ENCODE measurements at regions of chr15 and their contacts with region 1.

Region 1: GRCh38 chr15:66472176-66472999 is 25.2 kb downstream of the SNAPC5 start:
- DNase-seq: peak; percentile 43 to 81
- ATAC-seq: peak; percentile 91 to 96 (median 94)
- H3K4me3 ChIP-seq: no peak overlapping the region
- H3K4me3 Mint-ChIP-seq: peak overlapping the region; percentile 62
- H3K27ac ChIP-seq: peak overlapping the region; percentile 66
- H3K27ac Mint-ChIP-seq: peak overlapping the region; percentile 87 to 88
- H3K4me1 ChIP-seq: peaks cover 15% of the 10 kb centered on the region
- H3K4me1 Mint-ChIP-seq: peaks cover 31 to 33% of the 10 kb centered on the region in 2 donors
- H3K27me3 ChIP-seq: no peaks in the 10 kb centered on the region
- H3K27me3 Mint-ChIP-seq: no peaks in the 10 kb centered on the region
- CTCF ChIP-seq: no peak

Region 2: GRCh38 chr15:66401130-66402021 is 71.0 kb before region 1 on chr15:
- intact Hi-C with region 1: loop called (anchors 5 kb)
- DNase-seq: peak in 1 of 2 donors; percentile 42
- ATAC-seq: no peak
- H3K4me3 ChIP-seq: no peak overlapping the region
- H3K4me3 Mint-ChIP-seq: peak overlapping the region; percentile 62
- H3K27ac ChIP-seq: no peak overlapping the region
- H3K27ac Mint-ChIP-seq: peak overlapping the region; percentile 66 to 70
- H3K4me1 ChIP-seq: peaks cover 18% of the 10 kb centered on the region
- H3K4me1 Mint-ChIP-seq: peaks cover 56% of the 10 kb centered on the region in 2 donors
- H3K27me3 ChIP-seq: no peaks in the 10 kb centered on the region
- H3K27me3 Mint-ChIP-seq: no peaks in the 10 kb centered on the region
- CTCF ChIP-seq: no peak

Region 3: DNA sequence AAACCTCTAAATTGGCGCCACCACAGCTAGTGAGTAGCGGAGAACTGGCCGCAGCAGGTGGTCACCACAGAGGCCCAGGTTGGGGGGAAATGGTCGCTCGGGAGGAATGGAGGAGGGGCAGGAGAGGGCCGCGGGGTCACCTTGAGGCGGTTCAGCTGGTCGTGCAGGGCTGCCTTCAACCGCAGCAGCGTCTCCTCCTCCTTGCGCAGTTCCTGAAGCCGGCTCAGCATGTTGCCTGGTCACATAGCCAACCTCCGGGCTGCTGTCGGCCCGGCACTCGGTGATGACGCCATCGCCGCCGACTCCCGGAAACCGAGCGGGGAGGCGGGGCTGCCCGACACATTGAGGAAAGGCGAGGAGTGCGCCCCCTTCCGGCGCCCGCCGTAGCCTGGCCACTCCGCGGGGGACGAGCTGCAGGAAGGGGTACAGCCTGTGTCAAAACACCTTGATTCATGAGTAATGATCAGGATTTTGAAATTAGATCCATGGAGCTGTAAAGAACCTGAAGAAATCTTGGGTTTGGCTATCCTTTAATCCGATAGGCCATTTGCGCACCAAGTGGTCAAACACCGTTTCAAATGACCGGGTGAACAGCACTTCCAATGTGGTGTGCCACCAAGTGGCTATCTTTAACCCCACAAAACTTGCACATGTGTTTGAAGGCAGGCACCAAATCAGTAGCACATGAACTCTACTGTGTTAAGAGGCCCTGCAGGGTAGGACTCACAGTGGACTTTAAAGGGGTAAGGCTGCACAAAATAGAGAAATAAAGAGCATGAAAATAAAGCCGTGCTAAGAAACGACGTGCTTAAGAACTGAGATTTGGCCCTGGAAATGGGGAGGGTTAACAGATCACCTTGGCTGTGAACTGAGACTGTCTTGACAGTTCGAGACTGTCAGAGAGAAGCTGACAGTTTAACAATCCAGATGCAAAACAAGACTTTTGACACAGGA is 25.4 kb after region 1 on chr15 and contains the start of gene SNAPC5:
- intact Hi-C with region 1: loop called (anchors 1 kb)
- DNase-seq: peak; percentile 98
- ATAC-seq: peak; percentile 95 to 98 (median 96)
- H3K4me3 ChIP-seq: peak within 1 kb of the TSS; percentile 79
- H3K4me3 Mint-ChIP-seq: peak within 1 kb of the TSS; percentile 92
- H3K27ac ChIP-seq: peak within 1 kb of the TSS; percentile 82
- H3K27ac Mint-ChIP-seq: peak within 1 kb of the TSS; percentile 93 to 97
- H3K4me1 ChIP-seq: peaks cover 25% of the 10 kb centered on the region
- H3K4me1 Mint-ChIP-seq: peaks cover 18 to 36% of the 10 kb centered on the region in 2 donors
- H3K27me3 ChIP-seq: no peaks in the 10 kb centered on the region
- H3K27me3 Mint-ChIP-seq: no peaks in the 10 kb centered on the region
- CTCF ChIP-seq: peak; percentile 99
- total RNA-seq, gene SNAPC5: 17.2 to 25.2 (median 24.3) TPM

Region 4: GRCh38 chr15:66774001-66774814 is 301.8 kb after region 1 on chr15:
- intact Hi-C with region 1: no loop called
- DNase-seq: peak in 1 of 2 donors; percentile 70
- ATAC-seq: peak in 2 of 3 donors; percentile 55 to 63
- H3K4me3 ChIP-seq: no peak overlapping the region
- H3K4me3 Mint-ChIP-seq: no peak overlapping the region
- H3K27ac ChIP-seq: no peak overlapping the region
- H3K27ac Mint-ChIP-seq: no peak overlapping the region
- H3K4me1 ChIP-seq: no peaks in the 10 kb centered on the region
- H3K4me1 Mint-ChIP-seq: no peaks in the 10 kb centered on the region
- H3K27me3 ChIP-seq: no peaks in the 10 kb centered on the region
- H3K27me3 Mint-ChIP-seq: no peaks in the 10 kb centered on the region
- CTCF ChIP-seq: peak; percentile 23

Measured in natural killer cell (primary cell).